RWPE1 (cell line): ENCODE measurements at regions of chr4 and their contacts with region 1.

Region 1: GRCh38 chr4:102713096-102713495 is 47.7 kb downstream of the MANBA start:
- DNase-seq: peak; percentile 23
- H3K27ac ChIP-seq: no peak overlapping the region
- CTCF ChIP-seq: no peak

Region 2: DNA sequence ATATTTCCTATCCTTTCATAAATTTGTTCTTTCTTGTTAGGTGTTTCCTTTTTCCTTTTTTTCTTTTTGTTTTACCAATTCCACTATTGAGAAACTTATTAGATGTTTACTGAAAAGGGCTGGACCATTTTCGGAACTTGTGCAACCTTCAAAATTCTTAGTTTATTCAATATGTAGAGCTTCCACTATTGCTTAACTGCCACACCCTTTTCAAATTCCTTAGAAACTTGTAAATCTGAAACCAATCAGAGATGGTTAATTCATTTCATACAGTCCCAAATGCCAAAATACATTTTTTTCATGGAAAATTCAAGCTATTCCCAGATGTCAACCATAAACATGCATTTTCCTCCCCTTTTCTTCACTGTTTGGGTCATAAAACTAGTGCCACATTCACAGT is 301.7 kb before region 1 on chr4:
- CTCF ChIA-PET with region 1: interaction called, 16 read pairs
- POLR2A ChIA-PET with region 1: no interaction called
- DNase-seq: no peak
- H3K27ac ChIP-seq: no peak overlapping the region
- CTCF ChIP-seq: no peak